Ascending aorta (tissue), 2 donors: ENCODE measurements at regions of chr5 and their contacts with region 1.

Region 1: GRCh38 chr5:119302916-119303897 is 52.6 kb upstream of the TNFAIP8 start:
- DNase-seq: peak in 1 of 2 donors; percentile 80
- H3K4me3 ChIP-seq: no peak overlapping the region
- H3K27ac ChIP-seq: peak overlapping the region; percentile 44 to 78
- H3K4me1 ChIP-seq: peaks cover 3 to 24% of the 10 kb centered on the region in 2 donors
- H3K27me3 ChIP-seq: no peaks in the 10 kb centered on the region
- CTCF ChIP-seq: no peak

Region 2: GRCh38 chr5:119083679-119084078 is 219.5 kb before region 1 on chr5:
- intact Hi-C with region 1: no loop called
- DNase-seq: no peak
- H3K4me3 ChIP-seq: no peak overlapping the region
- H3K27ac ChIP-seq: no peak overlapping the region
- H3K4me1 ChIP-seq: peaks cover 0 to 4% of the 10 kb centered on the region in 2 donors
- H3K27me3 ChIP-seq: no peaks in the 10 kb centered on the region
- CTCF ChIP-seq: no peak

Region 3: DNA sequence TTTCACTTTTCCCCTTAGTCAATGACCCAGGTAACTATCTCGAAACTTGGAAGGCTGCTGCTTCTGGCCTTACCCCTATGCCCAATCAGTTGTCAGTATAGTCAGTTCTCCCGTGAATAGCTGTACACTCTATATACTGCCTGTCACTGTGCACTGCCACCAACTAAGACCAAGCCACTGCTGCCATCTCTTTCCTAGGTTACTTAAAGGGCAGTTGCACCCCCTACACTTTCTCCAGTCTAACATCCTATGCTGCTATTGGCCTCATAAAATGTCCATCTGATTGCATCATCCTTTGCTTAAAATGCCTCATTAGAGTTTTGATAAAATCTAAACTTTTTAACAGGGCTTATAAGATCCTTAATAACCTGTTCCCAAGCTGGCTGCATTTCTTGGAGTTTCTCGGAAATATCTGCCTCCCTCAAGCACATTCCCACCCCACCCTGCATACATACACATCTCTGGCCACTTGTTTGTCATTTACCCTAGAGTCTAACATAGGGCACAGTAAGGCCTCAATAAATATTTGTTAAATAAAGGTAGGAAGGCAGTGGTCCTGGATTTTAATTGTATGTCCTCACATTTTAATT is 19.8 kb after region 1 on chr5:
- intact Hi-C with region 1: loop called (anchors 1 kb)
- DNase-seq: no peak
- H3K4me3 ChIP-seq: no peak overlapping the region
- H3K27ac ChIP-seq: peak overlapping the region; percentile 80 to 82
- H3K4me1 ChIP-seq: peaks cover 4 to 13% of the 10 kb centered on the region in 2 donors
- H3K27me3 ChIP-seq: no peaks in the 10 kb centered on the region
- CTCF ChIP-seq: no peak

Region 4: GRCh38 chr5:119328753-119329602 is 25.8 kb after region 1 on chr5:
- intact Hi-C with region 1: loop called (anchors 1 kb)
- DNase-seq: no peak
- H3K4me3 ChIP-seq: no peak overlapping the region
- H3K27ac ChIP-seq: peak overlapping the region; percentile 20 to 22
- H3K4me1 ChIP-seq: peaks cover 0 to 10% of the 10 kb centered on the region in 2 donors
- H3K27me3 ChIP-seq: no peaks in the 10 kb centered on the region
- CTCF ChIP-seq: no peak